Dorsolateral prefrontal cortex (tissue), 120 donors: ENCODE measurements at regions of chr22 and their contacts with region 1.

Region 1: GRCh38 chr22:39405346-39406085 is 5.9 kb downstream of the TAB1 start:
- DNase-seq: peak; percentile 56 to 88 (median 80)
- H3K4me3 ChIP-seq: peak overlapping the region in 54 of 59 donors; percentile 0 to 55 (median 34)
- H3K27ac ChIP-seq: peak overlapping the region in 58 of 59 donors; percentile 36 to 90 (median 81)
- H3K27me3 ChIP-seq: no peaks in the 10 kb centered on the region
- CTCF ChIP-seq: peak in 38 of 56 donors; percentile 5 to 53 (median 28)

Region 2: DNA sequence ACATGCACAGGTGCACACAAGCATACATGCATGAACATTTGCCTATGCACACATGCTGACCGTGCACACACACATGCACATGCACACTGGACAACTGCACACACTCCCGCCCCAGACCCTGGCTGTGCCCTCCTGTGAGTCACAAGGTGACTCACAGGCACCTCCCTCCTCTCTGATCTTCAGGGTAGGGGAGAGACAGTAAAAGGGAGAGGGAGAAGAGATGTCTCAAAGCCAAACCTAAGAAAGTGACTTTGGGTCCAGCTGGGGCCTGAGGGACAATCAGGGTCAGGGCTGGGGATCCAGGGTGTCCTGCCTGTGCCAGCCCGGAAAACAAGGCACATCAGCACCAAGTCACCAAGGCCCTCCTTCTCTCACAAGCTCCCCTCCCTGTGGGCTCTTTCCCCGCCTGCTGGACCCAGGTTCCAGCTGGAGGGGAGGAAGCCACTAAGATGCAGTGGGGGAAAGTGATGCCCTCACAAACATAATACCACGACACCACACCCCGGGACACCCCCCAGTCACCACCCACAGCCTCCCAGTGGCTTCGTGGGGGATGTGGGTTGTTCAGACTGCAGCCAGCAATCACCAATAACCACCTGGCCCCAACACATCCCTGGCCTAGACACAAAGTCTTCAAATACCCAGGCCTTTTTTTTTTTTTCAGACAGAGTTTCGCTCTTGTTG is 200.0 kb before region 1 on chr22:
- intact Hi-C with region 1: no loop called
- DNase-seq: peak in 1 of 10 donors; percentile 21
- H3K4me3 ChIP-seq: no peak overlapping the region
- H3K27ac ChIP-seq: no peak overlapping the region
- H3K27me3 ChIP-seq: no peaks in the 10 kb centered on the region
- CTCF ChIP-seq: no peak

Region 3: GRCh38 chr22:39462443-39463221 is 57.1 kb after region 1 on chr22:
- intact Hi-C with region 1: loop called (anchors 2 to 10 kb)
- DNase-seq: no peak
- H3K4me3 ChIP-seq: no peak overlapping the region
- H3K27ac ChIP-seq: peak overlapping the region; percentile 31 to 100 (median 99)
- H3K27me3 ChIP-seq: no peaks in the 10 kb centered on the region
- CTCF ChIP-seq: peak in 52 of 56 donors; percentile 20 to 74 (median 44)

Region 4: GRCh38 chr22:39502109-39502788 is 96.7 kb after region 1 on chr22 and contains the start of gene MIEF1:
- intact Hi-C with region 1: loop called in 1 of 2 experiments (anchors 5 kb)
- DNase-seq: peak; percentile 93 to 98 (median 96)
- H3K4me3 ChIP-seq: peak within 1 kb of the TSS; percentile 69 to 99 (median 95)
- H3K27ac ChIP-seq: peak within 1 kb of the TSS; percentile 87 to 99 (median 96)
- H3K27me3 ChIP-seq: no peaks in the 10 kb centered on the region
- CTCF ChIP-seq: peak in 39 of 56 donors; percentile 4 to 65 (median 36)
- total RNA-seq, gene MIEF1: 21.3 to 40.7 (median 28.0) TPM